Spleen (tissue), 13 donors: ENCODE measurements at regions of chr3 and their contacts with region 1.

Region 1: GRCh38 chr3:51670823-51671733 is at the start of gene TEX264:
- DNase-seq: peak; percentile 99
- H3K4me3 ChIP-seq: peak within 1 kb of the TSS; percentile 67 to 97 (median 91)
- H3K27ac ChIP-seq: peak within 1 kb of the TSS; percentile 91 to 98 (median 94)
- H3K4me1 ChIP-seq: peaks cover 32 to 71% (median 59%) of the 10 kb centered on the region in 6 donors
- H3K27me3 ChIP-seq: no peaks in the 10 kb centered on the region
- CTCF ChIP-seq: peak in 4 of 11 experiments; percentile 23 to 42 (median 30)
- POLR2A ChIP-seq: peak; percentile 59 to 71 (median 63)
- total RNA-seq, gene TEX264: 29.8 to 66.3 (median 46.0) TPM

Region 2: DNA sequence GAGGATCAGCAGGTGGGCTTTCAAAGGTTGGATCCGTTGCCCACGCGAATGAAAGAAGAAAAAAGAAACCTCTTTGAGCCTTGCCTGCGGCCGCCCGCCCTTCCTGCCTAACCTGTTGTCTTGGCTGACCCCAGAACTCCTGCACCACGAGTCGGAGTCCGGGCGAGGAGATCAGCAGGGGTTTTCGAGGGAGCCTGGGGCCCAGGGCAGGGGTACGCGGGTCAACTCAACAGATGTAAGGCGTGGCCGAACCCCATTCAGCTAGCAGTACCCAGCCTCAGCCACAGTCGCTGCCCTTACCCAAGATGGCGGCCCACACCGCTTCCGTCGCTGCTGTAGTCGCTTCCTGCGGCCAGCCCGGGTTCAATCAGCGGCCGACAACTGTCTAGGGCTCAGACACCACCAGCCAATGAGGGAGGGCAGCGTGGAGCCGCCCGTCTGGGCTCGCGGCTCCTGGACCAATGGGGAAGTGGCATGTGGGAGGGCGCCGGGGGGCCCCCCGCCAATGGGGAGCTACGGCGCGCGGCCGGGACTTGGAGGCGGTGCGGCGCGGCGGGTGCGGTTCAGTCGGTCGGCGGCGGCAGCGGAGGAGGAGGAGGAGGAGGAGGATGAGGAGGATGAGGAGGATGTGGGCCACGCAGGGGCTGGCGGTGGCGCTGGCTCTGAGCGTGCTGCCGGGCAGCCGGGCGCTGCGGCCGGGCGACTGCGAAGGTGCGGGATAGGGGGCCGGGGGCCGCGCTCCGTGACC is 286.2 kb before region 1 on chr3 and contains the start of gene MANF:
- intact Hi-C with region 1: loop called (anchors 10 kb)
- DNase-seq: peak; percentile 99
- H3K4me3 ChIP-seq: peak within 1 kb of the TSS; percentile 70 to 90 (median 84)
- H3K27ac ChIP-seq: peak within 1 kb of the TSS; percentile 91 to 98 (median 94)
- H3K4me1 ChIP-seq: peaks cover 26 to 67% (median 53%) of the 10 kb centered on the region in 6 donors
- H3K27me3 ChIP-seq: no peaks in the 10 kb centered on the region
- CTCF ChIP-seq: peak in 8 of 11 experiments; percentile 11 to 71 (median 38)
- POLR2A ChIP-seq: peak in 2 of 3 donors; percentile 76 to 81
- total RNA-seq, gene MANF: 32.0 to 85.8 (median 51.0) TPM

Region 3: GRCh38 chr3:51799879-51800749 is 129.0 kb after region 1 on chr3:
- intact Hi-C with region 1: no loop called
- DNase-seq: no peak
- H3K4me3 ChIP-seq: no peak overlapping the region
- H3K27ac ChIP-seq: no peak overlapping the region
- H3K4me1 ChIP-seq: no peaks in the 10 kb centered on the region
- H3K27me3 ChIP-seq: peaks cover 0 to 18% (median 6%) of the 10 kb centered on the region in 7 donors
- CTCF ChIP-seq: peak in 10 of 11 experiments; percentile 12 to 76 (median 71)
- POLR2A ChIP-seq: no peak